Activated B cell treated with CpG ODN at 0.5 μM for 24 hours (primary cell): ENCODE measurements at regions of chr12 and their contacts with region 1.

Region 1: GRCh38 chr12:79344855-79345847 is 345.6 kb downstream of the PAWR start:
- DNase-seq: no peak
- ATAC-seq: peak; percentile 40
- H3K4me3 Mint-ChIP-seq: no peak overlapping the region
- H3K27ac Mint-ChIP-seq: no peak overlapping the region
- H3K4me1 Mint-ChIP-seq: no peaks in the 10 kb centered on the region
- H3K27me3 Mint-ChIP-seq: no peaks in the 10 kb centered on the region
- CTCF ChIP-seq: no peak

Region 2: DNA sequence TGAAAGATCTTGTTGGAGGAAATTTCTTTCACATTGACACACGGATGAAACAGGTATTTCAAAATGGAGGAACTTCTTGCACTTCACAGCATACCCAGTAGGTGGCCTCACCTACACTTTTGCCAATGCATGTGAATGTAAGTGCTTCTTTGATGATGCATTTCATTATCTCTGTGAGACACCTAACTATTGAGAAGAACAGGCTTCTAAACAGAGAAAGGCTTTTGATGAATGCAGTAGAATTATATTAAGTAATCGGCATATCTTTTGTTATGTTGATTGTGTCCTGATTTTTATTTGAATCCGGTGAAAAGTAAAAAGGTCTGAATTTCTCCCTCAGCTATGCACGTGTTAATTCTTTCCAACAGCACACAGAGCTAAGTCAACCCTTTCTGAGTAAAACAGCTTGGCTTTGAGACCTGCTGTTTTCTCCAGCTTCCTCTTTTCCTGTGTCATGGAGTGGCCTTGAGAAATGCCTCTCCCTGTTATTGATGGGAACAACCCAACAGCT is 1115.5 kb before region 1 on chr12:
- CTCF ChIA-PET with region 1: no interaction called
- POLR2A ChIA-PET with region 1: no interaction called
- intact Hi-C with region 1: loop called (anchors 2 kb)
- DNase-seq: no peak
- ATAC-seq: peak; percentile 45
- H3K4me3 Mint-ChIP-seq: no peak overlapping the region
- H3K27ac Mint-ChIP-seq: no peak overlapping the region
- H3K4me1 Mint-ChIP-seq: no peaks in the 10 kb centered on the region
- H3K27me3 Mint-ChIP-seq: no peaks in the 10 kb centered on the region
- CTCF ChIP-seq: no peak

Region 3: DNA sequence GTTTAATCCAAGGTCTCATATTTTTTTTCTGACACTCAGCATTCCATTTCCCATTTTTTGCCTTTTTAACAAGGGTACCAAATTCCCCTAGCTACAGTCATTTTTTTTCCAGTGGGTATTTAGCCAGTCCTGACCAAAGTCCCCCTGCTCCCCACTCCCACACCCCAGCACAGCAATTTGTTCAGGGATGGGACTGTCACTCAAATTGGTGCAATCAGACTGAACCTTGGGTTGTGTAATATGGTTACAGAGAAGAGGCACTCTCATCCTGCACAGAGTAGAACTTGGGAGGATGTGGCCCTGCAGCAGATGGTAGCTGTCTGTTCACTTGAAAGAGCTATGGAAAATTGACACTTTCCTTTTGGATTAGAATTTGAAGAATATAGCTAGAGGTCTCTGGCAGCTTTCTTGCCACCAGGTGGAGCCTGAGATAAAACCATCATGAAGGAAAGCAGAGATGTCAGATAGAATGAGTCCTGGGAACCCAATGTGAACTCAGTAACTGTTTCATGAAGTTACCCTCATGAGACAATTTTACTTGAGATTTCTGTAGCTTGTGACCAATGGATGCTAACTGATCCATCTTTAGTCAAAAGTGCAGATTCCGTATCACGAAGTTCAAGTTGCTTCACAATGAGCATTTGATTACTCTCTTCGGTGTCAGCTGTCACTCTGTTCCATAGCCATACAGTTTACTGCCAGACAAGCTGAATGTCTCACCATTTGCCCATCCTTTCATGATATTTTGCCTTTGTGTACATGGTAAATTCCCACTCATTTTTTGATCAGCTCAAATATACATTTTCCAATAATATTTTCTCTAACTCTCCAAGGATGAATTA is 874.6 kb before region 1 on chr12:
- CTCF ChIA-PET with region 1: no interaction called
- POLR2A ChIA-PET with region 1: no interaction called
- intact Hi-C with region 1: loop called (anchors 10 kb)
- DNase-seq: no peak
- ATAC-seq: no peak
- H3K4me3 Mint-ChIP-seq: no peak overlapping the region
- H3K27ac Mint-ChIP-seq: no peak overlapping the region
- H3K4me1 Mint-ChIP-seq: no peaks in the 10 kb centered on the region
- H3K27me3 Mint-ChIP-seq: no peaks in the 10 kb centered on the region
- CTCF ChIP-seq: no peak